Calu3 (cell line): ENCODE measurements at regions of chr21 and their contacts with region 1.

Region 1: GRCh38 chr21:29164325-29164942 is 34.0 kb downstream of the MAP3K7CL start:
- DNase-seq: no peak
- H3K4me3 Mint-ChIP-seq: no peak overlapping the region
- H3K27ac Mint-ChIP-seq: peak overlapping the region; percentile 78
- H3K4me1 Mint-ChIP-seq: peaks cover 31% of the 10 kb centered on the region
- H3K27me3 Mint-ChIP-seq: no peaks in the 10 kb centered on the region
- CTCF ChIP-seq: no peak

Region 2: DNA sequence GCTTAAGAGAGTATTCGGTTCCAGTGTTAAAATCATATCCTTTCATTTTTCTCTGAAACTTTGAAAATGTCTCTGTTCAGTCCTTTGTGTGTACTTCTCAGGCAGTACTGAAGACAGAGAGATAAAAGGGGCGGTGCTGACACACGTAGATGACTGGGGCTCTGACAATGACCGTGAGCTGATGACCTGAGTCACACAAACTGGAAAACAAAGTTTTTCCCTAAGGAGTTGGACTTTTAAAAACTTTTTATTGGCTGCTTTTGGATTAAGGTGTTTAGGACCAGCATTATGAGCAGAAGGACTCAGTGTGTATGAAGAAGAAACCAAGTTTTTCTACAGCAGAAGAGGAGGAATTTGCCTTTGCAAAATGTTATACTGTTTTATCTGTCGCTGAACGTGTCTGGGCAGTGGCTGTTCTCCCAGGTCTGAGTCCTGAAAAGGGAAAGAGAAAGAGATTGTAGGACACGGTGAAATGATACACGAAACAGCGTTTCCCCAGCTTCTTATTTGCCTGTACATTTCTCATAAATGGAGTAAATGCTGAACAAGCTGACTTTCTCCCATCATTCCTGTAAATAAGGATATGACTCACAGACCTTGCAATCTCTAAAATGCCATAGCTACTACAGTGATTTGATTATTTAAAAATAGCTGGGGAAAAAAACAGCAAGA is 17.5 kb after region 1 on chr21:
- CTCF ChIA-PET with region 1: interaction called, 3 read pairs
- intact Hi-C with region 1: loop called (anchors 2 kb)
- DNase-seq: no peak
- H3K4me3 Mint-ChIP-seq: peak overlapping the region; percentile 46
- H3K27ac Mint-ChIP-seq: peak overlapping the region; percentile 85
- H3K4me1 Mint-ChIP-seq: peaks cover 43% of the 10 kb centered on the region
- H3K27me3 Mint-ChIP-seq: no peaks in the 10 kb centered on the region
- CTCF ChIP-seq: no peak

Region 3: DNA sequence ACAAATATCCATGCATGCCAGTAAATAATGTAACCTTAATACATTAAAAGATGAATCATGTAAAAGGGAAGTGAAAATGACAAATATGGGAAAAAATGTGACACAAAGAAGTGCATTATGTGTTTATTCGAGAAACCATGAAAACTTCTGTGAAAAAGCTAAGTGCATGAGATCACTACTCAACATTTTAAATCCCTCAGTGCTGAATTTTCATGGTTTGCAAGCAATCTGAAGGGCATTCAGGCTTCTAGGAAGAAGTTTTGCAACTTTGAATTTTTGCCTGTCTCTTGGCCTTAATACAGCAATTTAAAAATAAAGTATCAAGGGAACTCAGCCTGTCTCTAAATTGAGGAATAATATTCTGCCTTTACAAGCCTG is 44.2 kb after region 1 on chr21:
- CTCF ChIA-PET with region 1: no interaction called
- intact Hi-C with region 1: loop called (anchors 5 kb)
- DNase-seq: no peak
- H3K4me3 Mint-ChIP-seq: no peak overlapping the region
- H3K27ac Mint-ChIP-seq: peak overlapping the region; percentile 76
- H3K4me1 Mint-ChIP-seq: peaks cover 29% of the 10 kb centered on the region
- H3K27me3 Mint-ChIP-seq: no peaks in the 10 kb centered on the region
- CTCF ChIP-seq: no peak

Region 4: GRCh38 chr21:29299916-29300806 is 135.7 kb after region 1 on chr21:
- CTCF ChIA-PET with region 1: interaction called, 4 read pairs
- intact Hi-C with region 1: loop called (anchors 2 kb)
- DNase-seq: peak; percentile 27
- H3K4me3 Mint-ChIP-seq: peak overlapping the region; percentile 94
- H3K27ac Mint-ChIP-seq: peak overlapping the region; percentile 92
- H3K4me1 Mint-ChIP-seq: peaks cover 16% of the 10 kb centered on the region
- H3K27me3 Mint-ChIP-seq: no peaks in the 10 kb centered on the region
- CTCF ChIP-seq: no peak

Region 5: GRCh38 chr21:29343519-29343918 is 179.1 kb after region 1 on chr21:
- CTCF ChIA-PET with region 1: interaction called, 6 read pairs
- intact Hi-C with region 1: loop called (anchors 1 kb)
- DNase-seq: no peak
- H3K4me3 Mint-ChIP-seq: no peak overlapping the region
- H3K27ac Mint-ChIP-seq: no peak overlapping the region
- H3K4me1 Mint-ChIP-seq: peaks cover 12% of the 10 kb centered on the region
- H3K27me3 Mint-ChIP-seq: no peaks in the 10 kb centered on the region
- CTCF ChIP-seq: no peak

Region 6: DNA sequence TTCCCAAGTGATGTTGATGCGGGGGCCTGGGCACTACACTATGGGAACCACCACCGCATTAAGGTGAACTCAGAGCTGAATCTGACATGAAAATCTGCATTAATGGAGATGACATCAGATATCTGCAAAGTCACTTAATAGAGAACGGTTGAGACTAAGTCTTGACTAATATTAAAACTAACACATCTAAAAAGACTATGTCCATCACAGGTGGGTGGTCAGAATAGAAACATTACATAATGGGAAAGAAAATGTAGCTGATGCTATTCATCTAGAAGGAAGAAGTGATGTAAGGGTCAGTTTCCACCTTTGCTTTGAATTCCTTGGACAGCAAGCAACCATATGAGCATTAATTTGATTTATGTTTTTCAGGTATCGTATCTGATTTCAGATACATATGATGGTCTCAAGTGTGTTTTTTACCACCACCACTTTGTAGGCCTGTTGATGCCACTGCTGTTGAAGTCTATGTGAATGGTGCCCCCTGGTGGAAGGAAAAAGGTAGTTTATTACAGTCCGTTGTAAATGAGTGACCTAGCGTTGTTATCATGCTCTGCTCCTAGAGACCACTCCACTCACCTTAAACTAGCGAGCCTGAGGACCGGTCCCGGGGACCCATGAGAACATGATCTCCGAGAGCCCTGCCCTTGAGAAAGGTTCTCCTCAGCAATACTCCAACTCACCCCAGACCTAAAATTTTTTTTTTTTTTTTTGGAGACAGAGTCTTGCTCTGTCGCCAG is 207.8 kb after region 1 on chr21:
- CTCF ChIA-PET with region 1: interaction called, 5 read pairs
- intact Hi-C with region 1: loop called (anchors 10 kb)
- DNase-seq: peak; percentile 57
- H3K4me3 Mint-ChIP-seq: no peak overlapping the region
- H3K27ac Mint-ChIP-seq: no peak overlapping the region
- H3K4me1 Mint-ChIP-seq: no peaks in the 10 kb centered on the region
- H3K27me3 Mint-ChIP-seq: no peaks in the 10 kb centered on the region
- CTCF ChIP-seq: no peak

Region 7: GRCh38 chr21:29616352-29616751 is 451.9 kb after region 1 on chr21:
- CTCF ChIA-PET with region 1: no interaction called
- intact Hi-C with region 1: no loop called
- DNase-seq: no peak
- H3K4me3 Mint-ChIP-seq: no peak overlapping the region
- H3K27ac Mint-ChIP-seq: no peak overlapping the region
- H3K4me1 Mint-ChIP-seq: no peaks in the 10 kb centered on the region
- H3K27me3 Mint-ChIP-seq: no peaks in the 10 kb centered on the region
- CTCF ChIP-seq: no peak